Activated naive CD4-positive, alpha-beta T cell treated with anti-CD3 and anti-CD28 coated beads, Interleukin-2, amount 10 ng/mL, durations not matched to agents 7 days and 5 days (primary cell): ENCODE measurements at regions of chr6 and their contacts with region 1.

Region 1: GRCh38 chr6:144215932-144216667 is 65.8 kb downstream of the STX11 start:
- DNase-seq: peak; percentile 95
- H3K4me3 Mint-ChIP-seq: peak overlapping the region; percentile 81
- H3K27ac Mint-ChIP-seq: peak overlapping the region; percentile 89
- H3K4me1 Mint-ChIP-seq: peaks cover 36% of the 10 kb centered on the region
- H3K27me3 Mint-ChIP-seq: peaks cover 22% of the 10 kb centered on the region

Region 2: DNA sequence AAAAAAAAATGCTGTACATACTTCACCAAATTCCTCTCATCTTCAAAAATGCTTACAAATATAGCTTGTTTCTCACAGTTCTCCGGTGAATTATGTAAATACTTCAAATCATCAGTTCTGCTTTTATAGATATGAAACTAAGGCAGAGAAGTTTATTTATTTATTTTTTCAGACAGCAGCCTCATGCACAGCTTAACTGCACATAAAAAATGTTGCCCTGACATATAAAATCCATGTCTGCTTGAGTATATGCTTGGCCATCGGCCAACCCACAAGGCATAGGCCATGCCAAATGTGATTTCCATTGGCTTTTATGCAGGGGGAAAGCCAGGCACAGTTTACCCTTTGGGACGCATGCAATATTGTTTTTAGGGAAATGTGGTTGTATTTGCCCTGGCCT is 595.7 kb before region 1 on chr6:
- CTCF ChIA-PET with region 1: no interaction called
- DNase-seq: no peak
- H3K4me3 Mint-ChIP-seq: no peak overlapping the region
- H3K27ac Mint-ChIP-seq: no peak overlapping the region
- H3K4me1 Mint-ChIP-seq: peaks cover 12% of the 10 kb centered on the region
- H3K27me3 Mint-ChIP-seq: no peaks in the 10 kb centered on the region

Region 3: DNA sequence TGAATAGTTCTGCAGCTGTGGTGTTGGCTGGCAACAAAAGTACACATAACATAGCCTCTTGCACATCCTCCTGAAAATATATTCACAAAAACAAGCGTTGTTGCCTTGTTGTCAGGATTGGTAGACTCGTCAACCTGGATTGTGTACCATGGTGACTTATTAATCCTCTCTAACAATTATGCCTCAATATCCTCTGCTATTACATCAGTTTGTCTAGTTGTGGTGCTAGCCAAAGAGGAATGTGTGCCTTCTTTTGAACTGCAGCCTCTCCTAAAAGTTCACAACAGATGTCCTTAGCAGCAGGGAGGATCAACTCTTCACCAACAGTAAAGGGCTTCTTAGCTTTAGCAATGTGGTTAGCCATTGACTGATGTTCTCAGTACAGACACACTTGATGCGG is 117.1 kb before region 1 on chr6:
- CTCF ChIA-PET with region 1: interaction called, 22 read pairs
- DNase-seq: no peak
- H3K4me3 Mint-ChIP-seq: no peak overlapping the region
- H3K27ac Mint-ChIP-seq: no peak overlapping the region
- H3K4me1 Mint-ChIP-seq: peaks cover 22% of the 10 kb centered on the region
- H3K27me3 Mint-ChIP-seq: peaks cover 10% of the 10 kb centered on the region

Region 4: DNA sequence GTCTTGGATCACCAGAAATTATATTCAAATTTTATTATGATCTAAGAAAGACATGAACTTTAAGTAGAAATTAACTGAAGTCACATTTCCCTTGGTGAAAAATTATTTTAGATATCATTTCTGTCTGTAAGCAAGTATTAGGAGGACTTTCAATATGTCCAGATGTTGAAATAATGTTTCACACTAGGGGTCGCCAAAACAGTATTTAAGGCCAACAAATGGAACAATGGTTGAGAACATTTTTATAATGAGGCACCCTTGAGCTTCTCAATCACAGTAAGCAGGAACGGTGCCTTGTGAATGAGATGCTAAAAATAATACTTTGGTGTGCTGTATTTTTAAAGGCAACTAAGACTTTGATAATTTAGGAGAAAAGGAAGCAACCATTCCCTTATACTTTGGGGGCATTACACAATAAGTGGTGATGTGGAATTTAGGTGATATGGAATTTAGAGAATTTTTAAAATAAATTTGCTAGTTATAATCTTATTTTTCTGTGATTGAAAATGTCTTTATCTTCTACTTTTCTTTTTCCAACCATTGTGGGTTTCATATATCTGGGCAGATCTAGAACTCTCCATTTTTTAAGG is 111.1 kb before region 1 on chr6:
- CTCF ChIA-PET with region 1: interaction called, 39 read pairs
- DNase-seq: peak; percentile 27
- H3K4me3 Mint-ChIP-seq: no peak overlapping the region
- H3K27ac Mint-ChIP-seq: no peak overlapping the region
- H3K4me1 Mint-ChIP-seq: no peaks in the 10 kb centered on the region
- H3K27me3 Mint-ChIP-seq: peaks cover 4% of the 10 kb centered on the region